Spleen (tissue), 13 donors: ENCODE measurements at regions of chr16 and their contacts with region 1.

Region 1: DNA sequence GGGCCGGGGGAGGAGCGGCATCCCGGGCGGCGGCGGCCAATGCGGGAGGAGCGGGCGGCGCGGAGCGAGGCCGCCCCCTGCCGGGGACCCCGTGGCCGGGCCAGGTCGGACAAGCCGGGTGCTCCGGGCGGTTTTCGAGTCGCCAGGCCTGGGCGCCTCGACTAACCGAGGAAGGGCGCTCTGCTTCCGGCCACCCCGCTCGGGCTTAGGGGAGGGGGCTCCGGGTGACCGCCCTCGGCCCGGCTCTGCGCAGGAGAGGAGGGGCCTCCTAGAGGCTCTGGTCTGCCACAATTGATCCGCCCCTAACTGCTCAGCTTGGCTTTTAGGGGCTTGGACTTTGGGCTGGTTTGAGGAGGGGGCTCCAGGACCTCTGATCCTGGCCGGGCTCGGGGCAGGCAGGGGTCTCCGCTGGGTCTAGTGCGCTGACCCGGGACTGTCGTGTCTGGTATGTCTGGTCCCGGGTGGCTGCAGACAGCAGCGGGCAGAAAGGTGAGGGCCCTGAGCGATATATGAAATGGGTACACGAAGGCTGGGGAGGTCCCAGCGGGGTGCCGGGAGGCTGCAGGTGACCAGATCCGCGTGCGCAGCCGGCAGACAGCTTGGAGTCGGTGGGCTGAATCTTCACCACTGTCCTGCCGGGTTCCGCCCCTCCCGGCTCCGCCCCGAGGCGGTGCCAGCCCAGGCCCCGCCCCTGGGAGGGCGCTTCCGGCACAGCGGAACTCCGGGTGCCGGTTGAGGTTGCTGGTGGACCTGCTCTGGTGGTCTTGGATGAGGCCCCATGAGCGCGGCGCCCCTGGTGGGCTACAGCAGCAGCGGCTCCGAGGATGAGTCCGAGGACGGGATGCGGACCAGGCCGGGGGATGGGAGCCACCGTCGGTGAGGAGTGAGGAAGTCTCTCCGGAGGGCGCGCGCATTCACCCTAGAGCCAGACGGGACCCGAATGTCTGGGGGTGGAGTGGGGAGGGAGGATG is at the start of gene USB1:
- DNase-seq: peak; percentile 98
- H3K4me3 ChIP-seq: peak within 1 kb of the TSS; percentile 60 to 92 (median 77)
- H3K27ac ChIP-seq: peak within 1 kb of the TSS; percentile 86 to 98 (median 96)
- H3K4me1 ChIP-seq: peaks cover 14 to 87% (median 56%) of the 10 kb centered on the region in 6 donors
- H3K27me3 ChIP-seq: no peaks in the 10 kb centered on the region
- CTCF ChIP-seq: peak; percentile 28 to 87 (median 83)
- POLR2A ChIP-seq: peak in 2 of 3 donors; percentile 5 to 66
- total RNA-seq, gene USB1: 35.0 to 78.4 (median 49.5) TPM

Region 2: GRCh38 chr16:57591086-57591869 is 409.7 kb before region 1 on chr16:
- intact Hi-C with region 1: loop called (anchors 10 kb)
- DNase-seq: peak; percentile 89
- H3K4me3 ChIP-seq: no peak overlapping the region
- H3K27ac ChIP-seq: peak overlapping the region in 4 of 8 donors; percentile 25 to 86 (median 72)
- H3K4me1 ChIP-seq: peaks cover 6 to 43% (median 24%) of the 10 kb centered on the region in 6 donors
- H3K27me3 ChIP-seq: peaks cover 0 to 14% (median 0%) of the 10 kb centered on the region in 7 donors
- CTCF ChIP-seq: peak; percentile 80 to 97 (median 88)
- POLR2A ChIP-seq: no peak

Region 3: DNA sequence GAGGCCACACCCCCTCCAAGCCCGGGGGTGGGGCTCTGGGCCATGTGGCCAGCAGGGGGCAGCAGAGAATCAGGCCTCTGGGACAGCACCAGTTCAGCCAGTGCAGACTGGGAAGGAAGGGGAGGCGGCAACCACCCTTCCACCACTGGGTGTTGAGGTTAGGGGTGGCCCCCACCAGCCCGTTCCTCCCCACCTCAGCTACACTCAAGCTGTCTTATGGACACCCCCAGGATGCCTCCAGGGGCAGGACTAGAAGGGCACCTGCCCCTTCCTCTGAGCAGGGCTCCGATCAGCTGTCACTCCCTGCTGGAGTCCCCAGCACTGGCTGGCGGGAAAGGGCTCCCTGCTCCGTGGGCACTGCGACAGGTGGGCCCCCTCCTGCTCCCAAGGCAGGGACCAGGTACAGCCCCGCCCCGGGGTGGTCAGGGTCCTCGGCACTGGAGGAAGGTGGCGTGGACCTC is 243.6 kb before region 1 on chr16:
- intact Hi-C with region 1: loop called (anchors 10 kb)
- DNase-seq: peak; percentile 96
- H3K4me3 ChIP-seq: no peak overlapping the region
- H3K27ac ChIP-seq: peak overlapping the region in 2 of 8 donors; percentile 45 to 48
- H3K4me1 ChIP-seq: peaks cover 0 to 22% (median 7%) of the 10 kb centered on the region in 6 donors
- H3K27me3 ChIP-seq: no peaks in the 10 kb centered on the region
- CTCF ChIP-seq: peak; percentile 81 to 100 (median 98)
- POLR2A ChIP-seq: no peak

Region 4: DNA sequence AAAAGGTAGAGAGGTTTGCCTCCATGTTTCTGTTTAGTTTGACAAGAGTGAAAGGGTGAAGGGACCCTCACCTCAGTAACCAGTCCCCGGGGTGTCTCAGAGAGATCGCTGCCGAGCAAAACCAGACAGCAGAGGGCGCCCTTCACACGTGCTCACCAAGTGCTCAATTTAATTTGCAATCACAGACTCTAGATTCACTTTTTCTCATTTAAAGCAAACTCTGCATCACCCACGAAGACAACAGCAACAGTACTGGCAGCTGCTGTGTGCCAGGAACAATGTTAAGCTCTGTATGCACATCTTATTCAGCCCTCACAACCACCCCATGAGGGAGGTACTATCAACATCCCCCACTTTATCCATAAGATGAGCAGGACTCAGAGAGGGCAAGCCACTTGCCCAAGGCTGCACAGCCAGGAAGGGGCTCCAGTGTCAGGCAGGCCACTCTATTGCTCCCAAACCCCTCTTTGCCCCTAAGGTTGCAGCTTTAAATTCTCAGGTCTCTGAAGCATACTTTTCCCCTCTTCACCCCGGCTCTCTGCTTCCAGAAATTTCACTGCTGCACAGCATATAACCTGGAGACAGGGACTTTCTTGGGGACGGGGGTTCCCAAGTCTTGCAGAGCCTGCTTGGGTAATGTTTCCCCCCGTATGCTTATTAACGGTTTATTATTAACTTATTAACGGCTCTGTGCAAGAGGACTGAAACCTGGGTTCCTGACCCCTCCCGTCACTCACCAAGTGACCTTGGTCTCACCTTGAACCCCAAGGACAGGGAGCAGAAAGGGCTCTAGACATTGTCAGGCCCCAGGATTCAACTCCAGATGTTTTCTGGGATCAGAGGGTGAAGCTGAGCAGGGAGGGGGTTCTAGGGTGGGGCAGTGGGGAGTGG is 101.0 kb before region 1 on chr16:
- intact Hi-C with region 1: loop called (anchors 2 kb)
- DNase-seq: peak; percentile 88
- H3K4me3 ChIP-seq: no peak overlapping the region
- H3K27ac ChIP-seq: no peak overlapping the region
- H3K4me1 ChIP-seq: peaks cover 0 to 19% (median 5%) of the 10 kb centered on the region in 6 donors
- H3K27me3 ChIP-seq: peaks cover 0 to 45% (median 7%) of the 10 kb centered on the region in 7 donors
- CTCF ChIP-seq: peak; percentile 59 to 89 (median 82)
- POLR2A ChIP-seq: no peak